Head of caudate nucleus (tissue), 42 donors: ENCODE measurements at regions of chr1 and their contacts with region 1.

Region 1: GRCh38 chr1:41919764-41920397 is 1.2 kb upstream of the HIVEP3 start:
- DNase-seq: peak in 36 of 42 donors; percentile 19 to 75 (median 42)

Region 2: GRCh38 chr1:42035830-42036604 is 116.1 kb after region 1 on chr1:
- intact Hi-C with region 1: loop called (anchors 10 kb)
- DNase-seq: peak; percentile 91 to 99 (median 98)

Region 3: GRCh38 chr1:42128499-42128898 is 208.6 kb after region 1 on chr1:
- intact Hi-C with region 1: no loop called
- DNase-seq: no peak

Region 4: GRCh38 chr1:42259059-42259738 is 339.3 kb after region 1 on chr1:
- intact Hi-C with region 1: no loop called
- DNase-seq: peak in 30 of 42 donors; percentile 9 to 78 (median 45)